ENCODE measurements at regions of chr10 and their contacts with region 1.

Region 1: GRCh38 chr10:16853201-16853600 is 36.0 kb upstream of the RSU1 start:
- DNase-seq: no peak
- ATAC-seq: peak; percentile 26; the same call in 2 of the 3 replicates
- H3K4me3 ChIP-seq: no peak overlapping the region
- H3K27ac ChIP-seq: no peak overlapping the region
- H3K4me1 ChIP-seq: no peaks in the 10 kb centered on the region
- H3K27me3 ChIP-seq: no peaks in the 10 kb centered on the region; a peak in 1 of 4 replicates
- CTCF ChIP-seq: peak in 2 of 3 experiments; percentile 24 to 40; a peak in 2 of 6 replicates
- EP300 ChIP-seq: no peak
- POLR2A ChIP-seq: no peak
- RAD21 ChIP-seq: peak; percentile 45; the same call in 1 of the 2 replicates

Region 2: DNA sequence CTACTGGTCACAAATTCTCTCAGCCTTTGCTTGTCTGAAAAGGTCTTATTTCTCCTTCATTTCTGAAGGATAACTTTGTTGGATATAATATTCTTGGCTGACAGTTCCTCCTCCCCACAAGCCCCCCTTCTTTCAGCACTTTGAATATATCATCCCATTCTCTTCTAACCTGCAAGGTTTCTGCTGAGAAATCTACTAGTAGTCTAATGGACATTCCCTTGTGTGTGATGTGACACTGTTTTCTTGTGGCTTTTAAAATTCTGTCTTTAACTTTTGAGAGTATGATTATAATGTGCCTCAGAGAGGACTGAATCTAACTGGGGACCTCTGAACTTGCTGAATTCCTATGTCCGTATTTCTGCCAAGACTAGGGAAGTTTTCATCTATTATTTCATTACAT is 140.3 kb before region 1 on chr10:
- CTCF ChIA-PET with region 1: no interaction called
- POLR2A ChIA-PET with region 1: no interaction called
- RAD21 ChIA-PET with region 1: no interaction called
- SMC1A ChIA-PET with region 1: no interaction called
- in situ Hi-C with region 1: no loop called
- intact Hi-C with region 1: no loop called
- DNase-seq: no peak
- ATAC-seq: no peak
- H3K4me3 ChIP-seq: no peak overlapping the region
- H3K27ac ChIP-seq: no peak overlapping the region
- H3K4me1 ChIP-seq: no peaks in the 10 kb centered on the region
- H3K27me3 ChIP-seq: no peaks in the 10 kb centered on the region
- CTCF ChIP-seq: no peak
- EP300 ChIP-seq: no peak
- POLR2A ChIP-seq: no peak
- RAD21 ChIP-seq: no peak

Region 3: DNA sequence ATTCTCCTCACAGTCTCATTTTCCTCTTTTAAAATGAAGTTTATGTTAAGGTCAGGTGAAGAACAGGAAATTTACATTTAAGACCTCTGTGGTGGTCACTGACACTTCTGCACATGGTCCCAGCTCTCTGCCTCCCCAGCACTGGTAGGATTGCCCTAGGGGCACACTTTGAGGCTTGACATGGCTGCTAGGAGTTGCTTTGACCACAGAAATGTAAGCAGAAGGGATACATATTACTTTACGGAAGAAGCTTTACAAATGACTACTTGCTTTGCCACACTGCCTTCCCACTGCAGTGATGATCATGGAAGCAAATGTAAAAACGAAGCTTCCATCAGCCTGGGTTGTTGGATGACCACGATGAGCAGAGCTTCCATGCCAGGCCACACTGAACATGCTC is 17.1 kb after region 1 on chr10:
- CTCF ChIA-PET with region 1: no interaction called
- POLR2A ChIA-PET with region 1: no interaction called
- RAD21 ChIA-PET with region 1: no interaction called
- SMC1A ChIA-PET with region 1: interaction called, 10 read pairs
- in situ Hi-C with region 1: no loop called
- intact Hi-C with region 1: no loop called
- DNase-seq: no peak
- ATAC-seq: no peak
- H3K4me3 ChIP-seq: no peak overlapping the region
- H3K27ac ChIP-seq: no peak overlapping the region
- H3K4me1 ChIP-seq: no peaks in the 10 kb centered on the region
- H3K27me3 ChIP-seq: 0 out of 4 replicates have a peak, but pooled peaks cover 0 to 2% of the 10 kb centered on the region in 2 experiments
- CTCF ChIP-seq: no peak
- EP300 ChIP-seq: no peak
- POLR2A ChIP-seq: no peak
- RAD21 ChIP-seq: no peak

Region 4: GRCh38 chr10:16904639-16905061 is 51.4 kb after region 1 on chr10:
- CTCF ChIA-PET with region 1: no interaction called
- POLR2A ChIA-PET with region 1: no interaction called
- RAD21 ChIA-PET with region 1: no interaction called
- SMC1A ChIA-PET with region 1: no interaction called
- in situ Hi-C with region 1: no loop called
- intact Hi-C with region 1: no loop called
- DNase-seq: no peak
- ATAC-seq: no peak
- H3K4me3 ChIP-seq: no peak overlapping the region
- H3K27ac ChIP-seq: no peak overlapping the region
- H3K4me1 ChIP-seq: no peaks in the 10 kb centered on the region
- H3K27me3 ChIP-seq: no peaks in the 10 kb centered on the region
- CTCF ChIP-seq: no peak
- EP300 ChIP-seq: no peak
- POLR2A ChIP-seq: no peak
- RAD21 ChIP-seq: no peak

Region 5: GRCh38 chr10:16933783-16934182 is 80.6 kb after region 1 on chr10:
- CTCF ChIA-PET with region 1: no interaction called
- POLR2A ChIA-PET with region 1: no interaction called
- RAD21 ChIA-PET with region 1: no interaction called
- SMC1A ChIA-PET with region 1: no interaction called
- in situ Hi-C with region 1: no loop called
- intact Hi-C with region 1: no loop called
- DNase-seq: no peak
- ATAC-seq: no peak
- H3K4me3 ChIP-seq: no peak overlapping the region
- H3K27ac ChIP-seq: no peak overlapping the region
- H3K4me1 ChIP-seq: no peaks in the 10 kb centered on the region
- H3K27me3 ChIP-seq: no peaks in the 10 kb centered on the region
- CTCF ChIP-seq: no peak
- EP300 ChIP-seq: no peak
- POLR2A ChIP-seq: no peak
- RAD21 ChIP-seq: no peak

Region 6: DNA sequence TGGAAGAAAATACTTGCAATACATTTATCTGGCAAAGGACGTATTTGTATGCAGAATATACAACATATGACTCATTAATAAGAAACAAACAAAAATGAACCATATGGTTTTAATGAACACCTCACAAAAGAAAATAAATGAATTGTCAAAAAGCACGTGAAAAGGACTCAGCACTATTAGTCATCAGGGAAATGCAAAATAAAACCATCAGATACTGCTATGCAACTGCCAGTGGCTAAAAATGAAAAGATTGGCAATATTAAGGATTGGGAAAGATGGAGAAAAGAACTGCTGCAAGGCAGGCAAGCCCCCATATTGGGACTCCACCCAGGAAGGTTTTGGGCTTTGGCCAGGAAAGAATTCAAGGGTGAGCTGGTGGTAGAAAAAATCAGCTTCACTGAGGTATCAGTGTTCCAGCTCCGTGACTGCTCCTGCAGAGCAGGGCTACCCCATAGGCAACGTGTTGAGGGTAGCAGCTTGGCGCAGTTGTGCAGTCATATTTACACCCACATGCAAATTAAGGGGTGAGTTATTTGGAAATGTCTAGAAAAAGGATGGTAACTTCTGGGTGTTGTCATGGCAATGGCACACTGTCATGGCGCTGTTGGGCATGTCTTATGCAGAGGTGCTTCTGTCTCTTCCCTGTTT is 203.7 kb after region 1 on chr10:
- CTCF ChIA-PET with region 1: no interaction called
- POLR2A ChIA-PET with region 1: no interaction called
- RAD21 ChIA-PET with region 1: no interaction called
- SMC1A ChIA-PET with region 1: no interaction called
- in situ Hi-C with region 1: no loop called
- intact Hi-C with region 1: no loop called
- DNase-seq: no peak
- ATAC-seq: no peak
- H3K4me3 ChIP-seq: no peak overlapping the region
- H3K27ac ChIP-seq: no peak overlapping the region
- H3K4me1 ChIP-seq: no peaks in the 10 kb centered on the region
- H3K27me3 ChIP-seq: no peaks in the 10 kb centered on the region
- CTCF ChIP-seq: no peak
- EP300 ChIP-seq: no peak
- POLR2A ChIP-seq: no peak
- RAD21 ChIP-seq: no peak

Region 7: DNA sequence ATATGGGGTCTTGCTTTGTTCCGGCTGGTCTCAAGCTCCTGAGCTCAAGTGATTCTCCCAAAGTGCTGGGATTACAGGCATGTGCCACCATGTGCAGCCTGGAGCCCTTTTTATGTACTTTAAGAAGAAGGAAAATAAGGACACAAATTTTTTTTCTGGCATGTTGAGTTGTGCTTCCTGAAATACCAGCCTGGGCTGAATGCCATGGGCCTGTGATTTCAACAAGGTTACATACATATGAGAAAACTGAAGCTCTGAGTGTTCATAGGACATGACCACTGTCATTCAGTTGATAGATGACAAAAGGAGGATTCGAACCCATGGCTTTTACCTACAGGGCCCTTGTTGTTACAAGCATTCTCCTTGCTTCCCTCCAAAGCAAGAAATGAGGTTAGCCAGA is 565.0 kb after region 1 on chr10:
- CTCF ChIA-PET with region 1: no interaction called
- POLR2A ChIA-PET with region 1: no interaction called
- RAD21 ChIA-PET with region 1: no interaction called
- SMC1A ChIA-PET with region 1: no interaction called
- in situ Hi-C with region 1: no loop called
- intact Hi-C with region 1: loop called (anchors 5 kb)
- DNase-seq: no peak
- ATAC-seq: no peak
- H3K4me3 ChIP-seq: no peak overlapping the region
- H3K27ac ChIP-seq: no peak overlapping the region
- H3K4me1 ChIP-seq: no peaks in the 10 kb centered on the region
- H3K27me3 ChIP-seq: 0 out of 4 replicates have a peak, but pooled peaks cover 0 to 3% of the 10 kb centered on the region in 2 experiments
- CTCF ChIP-seq: no peak
- EP300 ChIP-seq: no peak
- POLR2A ChIP-seq: no peak
- RAD21 ChIP-seq: no peak

Region 8: DNA sequence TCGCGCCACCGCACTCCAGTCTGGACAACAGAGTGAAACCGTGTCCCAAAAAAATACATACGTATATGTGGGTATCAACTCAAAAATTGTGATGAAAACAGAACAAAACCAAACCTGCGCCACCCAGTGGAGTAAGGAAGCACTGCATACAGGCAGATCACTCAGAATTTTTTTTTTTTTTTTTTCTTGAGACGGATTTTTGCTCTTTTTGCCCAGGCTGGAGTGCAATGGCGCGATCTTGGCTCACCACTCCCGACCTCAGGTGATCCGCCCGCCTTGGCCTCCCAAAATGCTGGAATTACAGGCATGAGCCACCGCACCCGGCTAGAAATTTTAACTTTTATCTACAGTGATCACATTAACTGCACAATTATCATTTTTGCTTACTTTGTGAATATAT is 889.7 kb after region 1 on chr10:
- CTCF ChIA-PET with region 1: no interaction called
- POLR2A ChIA-PET with region 1: no interaction called
- RAD21 ChIA-PET with region 1: no interaction called
- SMC1A ChIA-PET with region 1: no interaction called
- in situ Hi-C with region 1: loop called (anchors 25 kb)
- intact Hi-C with region 1: loop called (anchors 5 kb)
- DNase-seq: no peak
- ATAC-seq: peak; percentile 58
- H3K4me3 ChIP-seq: no peak overlapping the region
- H3K27ac ChIP-seq: no peak overlapping the region
- H3K4me1 ChIP-seq: no peaks in the 10 kb centered on the region
- H3K27me3 ChIP-seq: no peaks in the 10 kb centered on the region; a peak in 1 of 4 replicates
- CTCF ChIP-seq: peak; percentile 70 to 83 (median 77)
- EP300 ChIP-seq: no peak
- POLR2A ChIP-seq: no peak
- RAD21 ChIP-seq: peak; percentile 70

Measured in GM12878 (cell line).